ENCODE measurements at regions of chr1 and their contacts with region 1.

Region 1: GRCh38 chr1:179365320-179366092 is at the start of gene AXDND1:
- ATAC-seq: peak; percentile 95 to 98 (median 96)
- H3K4me3 ChIP-seq: peak within 1 kb of the TSS; percentile 47 to 61 (median 51)
- H3K27ac ChIP-seq: peak within 1 kb of the TSS; percentile 93 to 96
- H3K4me1 ChIP-seq: peaks cover 3 to 5% of the 10 kb centered on the region in 2 donors
- total RNA-seq, gene AXDND1: 0.27 to 2.6 (median 1.5) TPM

Region 2: GRCh38 chr1:179081687-179082332 is 283.7 kb before region 1 on chr1 and contains the start of gene TOR3A:
- in situ Hi-C with region 1: loop called in 6 of 9 experiments (anchors 10 to 25 kb)
- ATAC-seq: peak; percentile 84 to 93 (median 93)
- H3K4me3 ChIP-seq: peak within 1 kb of the TSS; percentile 42 to 66 (median 61)
- H3K27ac ChIP-seq: peak within 1 kb of the TSS in 1 of 2 donors; percentile 8
- H3K4me1 ChIP-seq: peaks cover 2 to 9% of the 10 kb centered on the region in 2 donors
- total RNA-seq, gene TOR3A: 9.2 to 27.9 (median 13.4) TPM

Region 3: DNA sequence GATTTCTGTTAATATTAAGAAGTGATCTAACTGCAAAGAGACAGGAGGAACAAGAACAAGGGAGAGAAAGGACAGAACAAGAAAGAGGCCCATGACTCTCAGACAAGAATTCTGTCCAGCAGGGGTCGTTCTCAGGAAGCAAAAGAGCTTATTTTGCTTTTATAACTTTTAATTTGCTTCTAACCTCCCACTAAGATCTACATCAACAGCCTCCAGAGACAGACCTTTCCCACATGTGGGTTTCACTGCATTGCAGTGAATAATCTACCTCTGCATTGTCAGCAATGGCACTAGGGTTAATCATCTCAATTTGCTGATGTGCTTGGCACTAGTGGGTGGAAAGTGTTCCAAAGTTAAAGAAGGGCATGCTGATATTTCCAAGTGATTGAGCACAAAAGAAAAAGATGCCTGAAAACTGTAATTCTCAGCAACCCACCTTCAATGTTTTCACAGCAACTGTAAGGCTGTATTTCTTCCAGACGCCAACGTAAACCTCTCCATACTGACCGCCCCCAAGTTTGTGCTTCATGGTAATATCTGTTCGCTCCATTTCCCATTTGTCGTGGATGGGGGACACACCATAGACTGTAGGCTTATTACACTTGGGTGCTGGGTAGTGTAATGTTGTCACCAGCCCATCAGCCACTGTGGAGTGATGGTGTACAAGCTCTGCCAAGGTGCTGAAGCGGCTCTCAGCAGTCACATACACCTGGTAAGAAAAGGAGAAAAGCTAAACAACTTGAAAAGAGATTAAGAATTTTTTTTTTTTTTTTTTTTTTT is 244.2 kb before region 1 on chr1:
- in situ Hi-C with region 1: loop called in 1 of 9 experiments (anchors 25 kb)
- ATAC-seq: peak in 3 of 8 experiments; percentile 22 to 36 (median 25)
- H3K4me3 ChIP-seq: no peak overlapping the region
- H3K27ac ChIP-seq: no peak overlapping the region
- H3K4me1 ChIP-seq: no peaks in the 10 kb centered on the region

Region 4: GRCh38 chr1:179229214-179230140 is 136.0 kb before region 1 on chr1 and contains the start of gene ABL2:
- in situ Hi-C with region 1: loop called in 1 of 9 experiments (anchors 25 kb)
- ATAC-seq: peak; percentile 69 to 78 (median 74)
- H3K4me3 ChIP-seq: peak within 1 kb of the TSS; percentile 71 to 88 (median 77)
- H3K27ac ChIP-seq: peak within 1 kb of the TSS; percentile 84 to 91
- H3K4me1 ChIP-seq: peaks cover 6 to 14% of the 10 kb centered on the region in 2 donors
- total RNA-seq, gene ABL2: 12.3 to 26.6 (median 18.1) TPM

Region 5: GRCh38 chr1:179310721-179311120 is 54.8 kb before region 1 on chr1:
- in situ Hi-C with region 1: no loop called
- ATAC-seq: peak in 3 of 8 experiments; percentile 54 to 71 (median 69)
- H3K4me3 ChIP-seq: no peak overlapping the region
- H3K27ac ChIP-seq: no peak overlapping the region
- H3K4me1 ChIP-seq: no peaks in the 10 kb centered on the region

Region 6: DNA sequence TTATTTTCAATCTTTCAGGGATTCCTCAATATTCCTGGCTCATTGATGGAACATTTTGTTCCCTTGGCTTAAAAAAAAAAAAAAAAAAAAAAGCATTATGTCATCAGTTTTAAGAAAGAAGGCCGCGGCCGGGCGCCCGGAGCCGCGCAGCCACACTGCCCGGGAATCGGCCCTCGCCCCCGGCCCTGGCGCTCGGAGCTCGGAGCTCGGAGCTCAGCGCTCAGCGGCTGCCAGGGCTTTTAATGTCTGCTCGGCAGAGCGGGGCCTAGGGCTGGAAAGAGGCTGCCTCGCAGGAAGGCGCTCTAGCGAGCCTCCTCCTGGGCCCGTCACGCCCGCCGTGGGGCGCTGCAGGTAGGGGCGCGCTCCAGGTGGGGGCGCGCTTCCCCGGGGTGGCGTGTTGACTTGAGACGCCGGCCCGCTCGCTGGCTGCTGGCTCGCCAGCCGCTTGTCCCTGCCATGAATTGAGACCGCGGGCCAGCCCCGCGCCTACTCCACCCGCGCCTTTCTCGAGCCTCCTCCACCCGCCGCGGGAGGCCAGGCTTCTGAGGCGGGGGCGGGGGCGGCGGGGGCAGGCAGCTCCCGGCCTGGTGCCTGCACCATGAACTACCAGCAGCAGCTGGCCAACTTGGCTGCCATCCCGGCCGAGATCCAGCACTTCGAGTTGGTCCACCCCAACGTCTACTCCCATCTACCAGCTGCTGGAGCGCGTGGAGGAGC is 220.8 kb after region 1 on chr1:
- in situ Hi-C with region 1: no loop called
- ATAC-seq: peak; percentile 77 to 96 (median 90)
- H3K4me3 ChIP-seq: peak overlapping the region; percentile 21 to 40 (median 25)
- H3K27ac ChIP-seq: no peak overlapping the region
- H3K4me1 ChIP-seq: peaks cover 0 to 2% of the 10 kb centered on the region in 2 donors

Region 7: DNA sequence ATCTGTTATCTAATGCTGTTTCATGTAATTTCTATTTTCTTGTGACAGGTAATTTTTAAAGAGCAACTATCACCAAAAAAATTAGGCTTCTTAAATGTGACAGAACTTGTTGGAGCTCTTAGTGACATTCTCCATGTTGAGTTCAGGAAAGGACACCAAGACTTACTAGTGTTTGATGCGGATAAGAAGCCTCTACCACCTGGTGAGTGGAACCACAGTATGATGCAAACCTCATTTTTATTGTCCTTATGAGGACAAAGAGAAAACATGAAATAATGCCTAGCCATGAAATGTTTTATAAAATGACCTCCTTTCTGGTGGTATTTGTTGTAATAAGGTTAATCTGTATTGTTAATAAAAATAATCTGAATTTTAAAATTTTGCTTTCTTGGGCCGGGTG is 265.2 kb after region 1 on chr1:
- in situ Hi-C with region 1: no loop called
- ATAC-seq: no peak
- H3K4me3 ChIP-seq: no peak overlapping the region
- H3K27ac ChIP-seq: no peak overlapping the region
- H3K4me1 ChIP-seq: no peaks in the 10 kb centered on the region

Region 8: GRCh38 chr1:179867807-179868330 is 502.4 kb after region 1 on chr1:
- in situ Hi-C with region 1: no loop called
- ATAC-seq: peak in 5 of 8 experiments; percentile 31 to 93 (median 92)
- H3K4me3 ChIP-seq: no peak overlapping the region
- H3K27ac ChIP-seq: no peak overlapping the region
- H3K4me1 ChIP-seq: no peaks in the 10 kb centered on the region

Measured in motor neuron (in vitro differentiated cells).